Naive thymus-derived CD4-positive, alpha-beta T cell (primary cell): ENCODE measurements at regions of chr12 and their contacts with region 1.

Region 1: GRCh38 chr12:53220801-53221202 is 11.2 kb downstream of the RARG start:
- DNase-seq: peak in 8 of 9 donors; percentile 51 to 85 (median 55)
- ATAC-seq: peak; percentile 79
- H3K4me3 ChIP-seq: peak overlapping the region; percentile 95
- H3K4me3 Mint-ChIP-seq: peak overlapping the region; percentile 94 to 100 (median 98)
- H3K27ac ChIP-seq: peak overlapping the region; percentile 78
- H3K27ac Mint-ChIP-seq: peak overlapping the region; percentile 84 to 98 (median 94)
- H3K4me1 ChIP-seq: peaks cover 55 to 63% of the 10 kb centered on the region in 2 donors
- H3K4me1 Mint-ChIP-seq: peaks cover 50 to 80% (median 77%) of the 10 kb centered on the region in 7 donors
- H3K27me3 ChIP-seq: no peaks in the 10 kb centered on the region
- H3K27me3 Mint-ChIP-seq: no peaks in the 10 kb centered on the region

Region 2: GRCh38 chr12:53200458-53201176 is 20.2 kb before region 1 on chr12:
- CTCF ChIA-PET with region 1: interaction called, 88 read pairs
- POLR2A ChIA-PET with region 1: interaction called, 103 read pairs
- intact Hi-C with region 1: loop called in 1 of 2 experiments (anchors 1 kb)
- DNase-seq: peak in 4 of 9 donors; percentile 41 to 46 (median 42)
- ATAC-seq: peak; percentile 29
- H3K4me3 ChIP-seq: peak overlapping the region; percentile 21
- H3K4me3 Mint-ChIP-seq: peak overlapping the region; percentile 65 to 90 (median 76)
- H3K27ac ChIP-seq: peak overlapping the region; percentile 75
- H3K27ac Mint-ChIP-seq: peak overlapping the region; percentile 82 to 95 (median 92)
- H3K4me1 ChIP-seq: peaks cover 70 to 94% of the 10 kb centered on the region in 2 donors
- H3K4me1 Mint-ChIP-seq: peaks cover 56 to 91% (median 74%) of the 10 kb centered on the region in 7 donors
- H3K27me3 ChIP-seq: no peaks in the 10 kb centered on the region
- H3K27me3 Mint-ChIP-seq: no peaks in the 10 kb centered on the region

Region 3: DNA sequence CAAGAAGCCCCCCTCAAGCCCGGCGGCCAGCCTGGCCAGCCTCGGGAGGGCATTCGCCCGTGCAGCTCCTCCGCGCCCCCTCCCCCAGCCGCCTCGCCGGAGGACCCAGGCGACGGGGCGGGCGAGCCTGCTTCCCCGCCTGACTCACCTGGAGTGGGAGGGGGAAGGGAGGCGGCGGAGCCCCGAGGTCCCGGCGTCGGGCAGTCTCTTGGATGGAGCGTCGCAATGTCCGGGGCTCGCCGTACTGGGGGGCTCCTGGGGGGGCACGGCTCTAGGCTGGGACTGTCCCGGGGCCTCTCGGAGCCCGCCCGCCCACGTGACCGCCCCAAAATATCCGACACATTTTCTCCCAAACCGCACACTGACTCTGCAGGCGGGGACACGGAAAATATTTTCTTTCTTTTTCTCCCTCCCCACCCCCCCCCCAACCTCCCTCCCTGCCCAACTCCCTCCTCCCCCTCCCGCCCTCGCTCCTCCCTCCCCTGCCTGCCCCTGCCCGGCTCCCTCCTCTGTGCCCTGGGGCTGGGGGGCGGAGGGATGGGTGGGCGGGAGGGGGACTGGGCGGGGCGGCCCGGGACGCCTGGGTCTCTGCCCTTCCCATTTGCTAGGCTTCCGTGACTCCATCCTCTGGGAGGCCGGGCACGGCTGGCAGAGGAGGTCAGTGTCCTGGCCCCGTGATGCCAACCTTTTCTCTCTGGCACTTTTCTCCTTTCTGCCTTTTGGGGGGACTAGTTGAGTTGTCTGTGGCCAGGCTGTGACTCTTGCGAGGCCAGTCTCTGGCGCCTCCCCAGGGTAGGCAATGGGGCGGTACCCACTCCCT is 11.2 kb after region 1 on chr12 and contains the start of gene RARG:
- CTCF ChIA-PET with region 1: interaction called, 3 read pairs
- POLR2A ChIA-PET with region 1: interaction called, 10 read pairs
- intact Hi-C with region 1: loop called (anchors 1 kb)
- DNase-seq: peak in 3 of 9 donors; percentile 33 to 78 (median 58)
- ATAC-seq: peak; percentile 74
- H3K4me3 ChIP-seq: peak within 1 kb of the TSS; percentile 52
- H3K4me3 Mint-ChIP-seq: peak within 1 kb of the TSS; percentile 83 to 95 (median 88)
- H3K27ac ChIP-seq: peak within 1 kb of the TSS; percentile 56
- H3K27ac Mint-ChIP-seq: peak within 1 kb of the TSS; percentile 77 to 90 (median 86)
- H3K4me1 ChIP-seq: peaks cover 40% of the 10 kb centered on the region in 2 donors
- H3K4me1 Mint-ChIP-seq: peaks cover 38 to 76% (median 67%) of the 10 kb centered on the region in 7 donors
- H3K27me3 ChIP-seq: no peaks in the 10 kb centered on the region
- H3K27me3 Mint-ChIP-seq: no peaks in the 10 kb centered on the region
- total RNA-seq, gene RARG: 22.4 to 73.1 (median 57.4) TPM

Region 4: DNA sequence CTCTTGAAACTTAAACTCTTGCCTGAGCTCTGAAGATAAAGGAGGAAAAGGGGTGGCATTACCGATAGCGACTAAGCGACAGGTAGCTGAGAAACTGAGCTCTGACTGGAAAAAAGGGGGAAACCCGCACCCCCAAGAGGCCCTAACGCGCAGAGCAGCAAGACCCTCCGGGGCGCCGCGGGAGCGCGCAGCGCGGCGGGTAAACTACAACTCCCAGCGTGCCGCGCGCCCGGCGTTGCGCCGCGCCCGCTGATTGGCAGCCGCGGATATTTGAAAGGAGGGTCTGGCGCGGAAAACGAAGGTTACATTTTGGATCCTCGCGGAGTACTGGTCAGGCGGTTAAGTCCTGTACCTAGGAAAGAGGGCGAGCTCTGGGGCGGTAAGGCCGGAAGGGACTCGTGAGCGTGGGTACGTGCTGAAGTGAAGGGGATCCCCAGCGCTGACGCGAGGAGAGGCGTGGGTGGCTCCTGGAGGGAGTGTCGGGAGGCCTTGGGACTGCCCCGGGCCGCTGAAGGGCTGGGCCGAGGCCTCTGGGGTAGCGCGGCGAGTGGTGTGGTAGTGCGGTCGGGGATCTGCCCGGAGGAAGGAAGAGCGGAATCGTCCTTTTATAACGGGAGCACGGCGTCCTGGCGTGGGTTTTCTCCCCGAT is 47.3 kb after region 1 on chr12 and contains the start of gene ESPL1:
- CTCF ChIA-PET with region 1: interaction called, 72 read pairs
- POLR2A ChIA-PET with region 1: interaction called, 32 read pairs
- intact Hi-C with region 1: loop called (anchors 1 kb)
- DNase-seq: peak; percentile 67 to 91 (median 81)
- ATAC-seq: peak; percentile 93
- H3K4me3 ChIP-seq: peak within 1 kb of the TSS; percentile 80
- H3K4me3 Mint-ChIP-seq: peak within 1 kb of the TSS; percentile 95 to 99 (median 96)
- H3K27ac ChIP-seq: peak within 1 kb of the TSS; percentile 83
- H3K27ac Mint-ChIP-seq: peak within 1 kb of the TSS; percentile 44 to 98 (median 88)
- H3K4me1 ChIP-seq: peaks cover 9 to 11% of the 10 kb centered on the region in 2 donors
- H3K4me1 Mint-ChIP-seq: peaks cover 10 to 54% (median 20%) of the 10 kb centered on the region in 7 donors
- H3K27me3 ChIP-seq: no peaks in the 10 kb centered on the region
- H3K27me3 Mint-ChIP-seq: no peaks in the 10 kb centered on the region
- total RNA-seq, gene ESPL1: 0.08 to 65.4 (median 1.1) TPM

Region 5: DNA sequence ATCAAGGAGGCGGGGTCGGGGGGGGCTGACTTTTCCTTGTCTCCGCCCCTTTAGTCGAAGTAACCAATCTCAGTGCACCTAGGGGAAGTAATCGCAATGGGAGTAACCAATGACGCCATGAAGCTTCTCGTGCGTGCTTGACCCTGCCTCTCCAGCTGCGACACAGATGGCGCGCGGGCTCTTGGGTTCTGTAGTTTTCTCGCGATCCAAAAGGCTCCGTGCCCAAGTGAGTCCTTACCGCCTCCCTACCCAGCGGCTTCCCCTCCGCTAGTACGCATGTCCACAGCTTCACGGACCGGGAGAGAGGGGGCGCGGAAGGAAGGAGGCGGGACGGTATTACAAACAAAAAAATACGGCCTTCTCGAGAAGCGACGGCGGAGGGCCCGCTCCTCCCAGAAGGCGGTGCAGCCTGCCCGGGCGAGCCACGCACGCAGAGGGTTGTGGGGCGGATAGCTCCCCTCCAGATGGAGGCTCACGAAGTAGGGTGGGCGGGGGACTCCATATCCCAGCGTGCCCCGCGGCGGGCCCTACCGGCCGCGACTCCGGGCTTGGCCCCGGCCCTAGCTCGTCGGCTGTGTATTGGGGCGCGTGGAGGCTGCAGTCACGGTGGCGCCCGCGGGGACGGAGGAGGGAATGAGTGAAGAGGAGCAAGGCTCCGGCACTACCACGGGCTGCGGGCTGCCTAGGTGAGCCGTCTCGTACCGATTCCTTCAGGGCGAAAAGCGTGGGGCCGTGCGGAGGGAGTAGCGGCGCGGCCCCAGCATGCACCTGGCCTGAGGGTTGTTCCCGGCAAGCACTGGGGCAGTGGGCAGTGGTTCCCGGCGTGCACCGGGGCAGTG is 280.2 kb after region 1 on chr12 and contains the start of gene TARBP2:
- CTCF ChIA-PET with region 1: interaction called, 3 read pairs
- POLR2A ChIA-PET with region 1: interaction called, 6 read pairs
- intact Hi-C with region 1: loop called (anchors 5 kb)
- DNase-seq: peak; percentile 87 to 99 (median 98)
- ATAC-seq: peak; percentile 87
- H3K4me3 ChIP-seq: peak within 1 kb of the TSS; percentile 84
- H3K4me3 Mint-ChIP-seq: peak within 1 kb of the TSS; percentile 86 to 96 (median 92)
- H3K27ac ChIP-seq: peak within 1 kb of the TSS; percentile 98
- H3K27ac Mint-ChIP-seq: peak within 1 kb of the TSS; percentile 87 to 100 (median 97)
- H3K4me1 ChIP-seq: peaks cover 24 to 27% of the 10 kb centered on the region in 2 donors
- H3K4me1 Mint-ChIP-seq: peaks cover 15 to 56% (median 43%) of the 10 kb centered on the region in 7 donors
- H3K27me3 ChIP-seq: no peaks in the 10 kb centered on the region
- H3K27me3 Mint-ChIP-seq: no peaks in the 10 kb centered on the region
- total RNA-seq, gene TARBP2: 25.1 to 45.2 (median 40.7) TPM